GM12878 (cell line): ENCODE measurements at regions of chr6 and their contacts with region 1.

Region 1: GRCh38 chr6:1958257-1958656 is 287.1 kb downstream of the GMDS start:
- DNase-seq: no peak
- ATAC-seq: no peak
- H3K4me3 ChIP-seq: no peak overlapping the region
- H3K27ac ChIP-seq: no peak overlapping the region
- H3K4me1 ChIP-seq: no peaks in the 10 kb centered on the region
- H3K27me3 ChIP-seq: no peaks in the 10 kb centered on the region
- CTCF ChIP-seq: no peak
- EP300 ChIP-seq: no peak
- POLR2A ChIP-seq: no peak
- RAD21 ChIP-seq: no peak

Region 2: DNA sequence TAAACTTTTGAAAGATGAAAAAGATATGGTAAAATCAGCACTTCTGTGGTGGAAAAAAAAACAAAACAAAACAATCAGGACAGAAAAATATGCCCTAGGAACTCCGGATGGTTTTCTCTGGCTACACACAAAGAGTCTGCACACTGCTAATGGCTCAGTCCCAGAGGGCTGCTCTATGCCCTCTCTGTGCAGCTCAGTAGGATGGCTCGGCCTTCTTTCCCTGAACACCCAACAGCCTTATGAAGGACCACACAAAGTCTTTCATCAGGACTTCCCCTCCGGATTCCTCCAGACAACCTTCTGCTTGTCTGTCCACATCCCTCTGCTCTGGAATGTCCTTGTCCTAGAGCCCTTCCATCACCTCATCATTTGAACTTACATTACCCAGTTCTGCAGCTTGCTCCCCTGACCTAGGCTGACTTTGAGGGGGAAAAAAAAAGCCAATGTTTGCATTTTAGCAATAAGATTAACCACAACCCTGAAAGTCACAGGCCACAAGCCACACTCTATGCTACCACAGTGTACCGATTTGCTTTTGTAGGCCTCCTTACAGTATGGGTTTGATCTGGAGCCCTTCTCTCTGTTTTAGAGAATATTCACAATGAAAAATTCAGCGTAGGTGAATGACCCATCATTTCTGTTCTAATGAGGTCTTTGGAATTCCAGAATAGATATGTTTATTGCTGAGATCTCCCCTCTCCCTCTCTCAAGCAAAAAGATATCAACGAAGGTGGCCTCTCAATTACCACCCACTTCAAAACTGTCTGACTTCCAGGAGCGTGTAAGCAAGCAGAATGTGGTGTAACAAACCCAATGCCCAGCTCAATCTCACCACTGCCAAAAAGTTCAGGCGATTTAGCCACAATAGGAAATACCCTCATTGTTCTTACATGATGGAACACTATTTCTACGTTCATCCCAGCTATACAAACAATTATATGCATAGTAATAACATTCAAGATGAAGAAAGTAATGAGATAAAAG is 123.2 kb after region 1 on chr6:
- CTCF ChIA-PET with region 1: no interaction called
- POLR2A ChIA-PET with region 1: no interaction called
- RAD21 ChIA-PET with region 1: no interaction called
- SMC1A ChIA-PET with region 1: no interaction called
- in situ Hi-C with region 1: no loop called
- intact Hi-C with region 1: loop called (anchors 5 kb)
- DNase-seq: peak; percentile 68
- ATAC-seq: peak; percentile 94
- H3K4me3 ChIP-seq: peak overlapping the region; percentile 17; the same call in 1 of the 2 replicates
- H3K27ac ChIP-seq: no peak overlapping the region
- H3K4me1 ChIP-seq: peaks cover 24% of the 10 kb centered on the region
- H3K27me3 ChIP-seq: no peaks in the 10 kb centered on the region
- CTCF ChIP-seq: no peak
- EP300 ChIP-seq: peak in 1 of 2 experiments; percentile 50; a peak in 1 of 4 replicates
- POLR2A ChIP-seq: no peak
- RAD21 ChIP-seq: no peak

Region 3: GRCh38 chr6:2196079-2196679 is 237.9 kb after region 1 on chr6:
- CTCF ChIA-PET with region 1: no interaction called
- POLR2A ChIA-PET with region 1: no interaction called
- RAD21 ChIA-PET with region 1: no interaction called
- SMC1A ChIA-PET with region 1: no interaction called
- in situ Hi-C with region 1: no loop called
- intact Hi-C with region 1: no loop called
- DNase-seq: peak; percentile 13
- ATAC-seq: peak; percentile 87
- H3K4me3 ChIP-seq: no peak overlapping the region
- H3K27ac ChIP-seq: no peak overlapping the region
- H3K4me1 ChIP-seq: no peaks in the 10 kb centered on the region
- H3K27me3 ChIP-seq: no peaks in the 10 kb centered on the region
- CTCF ChIP-seq: peak; percentile 67 to 79 (median 77)
- EP300 ChIP-seq: no peak
- POLR2A ChIP-seq: no peak
- RAD21 ChIP-seq: peak; percentile 88